ENCODE measurements at regions of chr12 and their contacts with region 1.

Region 1: DNA sequence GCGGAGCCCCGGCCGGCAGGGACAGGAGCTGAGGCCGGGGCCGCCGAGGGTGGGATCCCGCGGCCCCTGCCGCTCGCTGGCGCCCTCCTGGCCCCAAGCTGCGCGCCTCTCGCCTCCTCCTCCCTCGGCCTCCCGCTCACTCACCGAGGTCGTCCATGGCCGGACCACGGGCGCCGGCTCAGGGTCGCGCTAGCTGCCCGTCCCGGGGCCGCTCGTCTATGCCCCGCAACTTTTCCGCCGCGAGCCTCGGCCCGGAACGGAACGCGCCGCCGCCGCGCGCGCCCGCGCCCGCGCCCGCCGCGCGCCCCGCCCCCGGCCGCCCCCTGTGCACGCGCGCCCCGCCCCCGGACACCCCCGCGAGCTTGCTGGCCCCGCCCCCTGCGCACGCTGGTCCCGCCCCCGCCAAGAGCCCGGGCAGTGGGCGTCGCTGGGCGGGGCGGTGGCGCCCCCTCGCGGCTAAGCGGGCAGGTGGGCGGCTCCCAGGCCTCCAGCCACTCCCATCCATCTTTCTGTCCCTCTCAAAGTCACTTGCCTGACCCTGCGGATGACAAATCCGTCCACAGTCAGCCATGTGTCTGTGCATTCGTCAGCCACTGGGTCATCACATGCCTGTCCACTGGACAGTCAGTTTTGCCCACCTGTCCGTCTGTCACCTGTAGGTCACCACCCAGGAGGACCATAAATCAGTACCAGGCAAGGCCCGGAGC is at the start of gene PXN:
- DNase-seq: peak; percentile 85
- H3K4me3 Mint-ChIP-seq: peak within 1 kb of the TSS; percentile 90
- H3K27ac Mint-ChIP-seq: peak within 1 kb of the TSS; percentile 85
- H3K4me1 Mint-ChIP-seq: peaks cover 43% of the 10 kb centered on the region
- H3K27me3 Mint-ChIP-seq: no peaks in the 10 kb centered on the region
- total RNA-seq, gene PXN: 44.4 and 45.4 TPM in 2 replicates

Region 2: GRCh38 chr12:119894916-119895315 is 370.7 kb before region 1 on chr12:
- intact Hi-C with region 1: no loop called
- DNase-seq: no peak
- H3K4me3 Mint-ChIP-seq: no peak overlapping the region
- H3K27ac Mint-ChIP-seq: no peak overlapping the region
- H3K4me1 Mint-ChIP-seq: no peaks in the 10 kb centered on the region
- H3K27me3 Mint-ChIP-seq: peaks cover 6% of the 10 kb centered on the region

Region 3: GRCh38 chr12:120228291-120229070 is 37.1 kb before region 1 on chr12:
- intact Hi-C with region 1: loop called (anchors 1 kb)
- DNase-seq: peak; percentile 79
- H3K4me3 Mint-ChIP-seq: peak overlapping the region; percentile 24
- H3K27ac Mint-ChIP-seq: peak overlapping the region; percentile 71
- H3K4me1 Mint-ChIP-seq: peaks cover 65% of the 10 kb centered on the region
- H3K27me3 Mint-ChIP-seq: no peaks in the 10 kb centered on the region